ENCODE measurements at regions of chr17 and their contacts with region 1.

Region 1: GRCh38 chr17:8057691-8058114 is 18.8 kb downstream of the ALOX15B start:
- DNase-seq: peak; percentile 59
- ATAC-seq: peak; percentile 72
- H3K4me3 Mint-ChIP-seq: no peak overlapping the region
- H3K27ac Mint-ChIP-seq: no peak overlapping the region
- H3K4me1 Mint-ChIP-seq: peaks cover 32% of the 10 kb centered on the region
- H3K27me3 Mint-ChIP-seq: peaks cover 44% of the 10 kb centered on the region

Region 2: DNA sequence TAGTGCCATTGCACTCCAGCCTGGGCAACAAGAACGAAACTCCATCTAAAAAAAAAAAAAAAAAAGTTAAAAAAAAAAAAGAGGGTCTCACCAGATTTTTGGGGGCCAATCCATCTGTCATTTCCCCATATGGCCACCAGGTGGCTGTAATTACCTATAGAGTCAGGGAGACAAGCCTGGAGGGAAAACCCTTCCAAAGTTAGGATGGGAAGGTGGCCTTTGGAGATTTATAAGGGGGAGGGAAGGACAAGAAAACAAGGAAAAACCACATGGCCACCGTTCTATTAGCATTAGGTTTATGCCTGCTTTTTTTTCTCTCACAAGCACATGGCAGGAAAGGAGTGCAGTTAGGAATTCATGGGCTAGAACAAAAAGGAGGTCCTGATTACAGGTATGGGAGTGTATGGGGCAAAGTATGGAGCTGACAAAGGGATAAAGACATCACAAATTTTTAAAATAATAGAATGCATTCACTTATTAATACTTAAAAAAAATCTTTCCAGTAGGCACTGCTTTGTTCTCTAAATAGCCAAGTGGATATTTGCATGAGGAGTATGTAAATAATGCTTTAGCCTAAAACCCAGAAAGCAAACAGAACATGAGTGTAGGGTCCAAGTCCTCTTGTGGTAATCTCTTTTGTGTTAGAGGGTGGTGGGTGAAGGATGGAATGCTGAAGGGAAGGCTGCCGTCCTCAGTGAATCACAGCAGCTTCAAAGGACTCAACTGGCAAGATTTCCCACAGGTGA is 194.8 kb before region 1 on chr17:
- CTCF ChIA-PET with region 1: interaction called, 12 read pairs
- POLR2A ChIA-PET with region 1: no interaction called
- DNase-seq: peak; percentile 61
- ATAC-seq: no peak
- H3K4me3 Mint-ChIP-seq: no peak overlapping the region
- H3K27ac Mint-ChIP-seq: no peak overlapping the region
- H3K4me1 Mint-ChIP-seq: peaks cover 20% of the 10 kb centered on the region
- H3K27me3 Mint-ChIP-seq: no peaks in the 10 kb centered on the region

Region 3: GRCh38 chr17:8016632-8017478 is 40.8 kb before region 1 on chr17:
- CTCF ChIA-PET with region 1: interaction called, 33 read pairs
- POLR2A ChIA-PET with region 1: no interaction called
- DNase-seq: peak; percentile 73
- ATAC-seq: peak; percentile 81
- H3K4me3 Mint-ChIP-seq: peak overlapping the region; percentile 69
- H3K27ac Mint-ChIP-seq: no peak overlapping the region
- H3K4me1 Mint-ChIP-seq: peaks cover 18% of the 10 kb centered on the region
- H3K27me3 Mint-ChIP-seq: peaks cover 39% of the 10 kb centered on the region

Region 4: DNA sequence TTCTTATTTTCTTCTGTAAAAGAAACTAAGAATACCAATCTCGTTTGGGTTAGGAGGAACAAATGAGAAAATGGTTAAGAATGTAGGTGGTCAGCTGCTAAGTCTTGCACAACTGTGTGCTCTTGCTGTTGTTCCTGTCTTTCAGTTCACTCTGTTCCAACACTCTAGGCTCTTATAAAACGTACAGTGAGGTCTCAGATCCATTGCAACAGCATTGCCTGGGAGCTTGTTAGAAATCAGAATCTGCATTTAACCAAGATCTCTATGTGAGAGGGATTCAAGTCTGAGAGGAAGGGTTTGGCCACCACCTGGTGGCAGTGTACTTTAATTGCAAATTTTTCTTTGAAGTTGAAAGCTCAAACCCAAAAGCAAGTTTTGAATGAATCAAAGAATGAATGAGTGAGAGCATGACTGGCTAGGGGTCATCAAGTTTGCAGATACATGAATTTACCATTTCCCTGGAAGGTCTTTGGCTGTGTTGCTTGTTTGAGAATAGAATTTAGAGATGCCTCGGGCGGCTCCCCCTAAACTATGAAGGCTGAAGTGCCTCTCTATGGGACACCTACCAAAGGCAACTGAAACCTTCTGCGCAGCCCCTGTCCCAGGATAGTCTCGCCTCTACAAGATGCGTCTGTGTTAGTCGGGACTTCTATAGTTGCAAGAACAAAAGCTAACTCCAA is 16.3 kb before region 1 on chr17:
- CTCF ChIA-PET with region 1: interaction called, 86 read pairs
- POLR2A ChIA-PET with region 1: no interaction called
- DNase-seq: peak; percentile 69
- ATAC-seq: no peak
- H3K4me3 Mint-ChIP-seq: no peak overlapping the region
- H3K27ac Mint-ChIP-seq: no peak overlapping the region
- H3K4me1 Mint-ChIP-seq: peaks cover 3% of the 10 kb centered on the region
- H3K27me3 Mint-ChIP-seq: peaks cover 35% of the 10 kb centered on the region

Region 5: DNA sequence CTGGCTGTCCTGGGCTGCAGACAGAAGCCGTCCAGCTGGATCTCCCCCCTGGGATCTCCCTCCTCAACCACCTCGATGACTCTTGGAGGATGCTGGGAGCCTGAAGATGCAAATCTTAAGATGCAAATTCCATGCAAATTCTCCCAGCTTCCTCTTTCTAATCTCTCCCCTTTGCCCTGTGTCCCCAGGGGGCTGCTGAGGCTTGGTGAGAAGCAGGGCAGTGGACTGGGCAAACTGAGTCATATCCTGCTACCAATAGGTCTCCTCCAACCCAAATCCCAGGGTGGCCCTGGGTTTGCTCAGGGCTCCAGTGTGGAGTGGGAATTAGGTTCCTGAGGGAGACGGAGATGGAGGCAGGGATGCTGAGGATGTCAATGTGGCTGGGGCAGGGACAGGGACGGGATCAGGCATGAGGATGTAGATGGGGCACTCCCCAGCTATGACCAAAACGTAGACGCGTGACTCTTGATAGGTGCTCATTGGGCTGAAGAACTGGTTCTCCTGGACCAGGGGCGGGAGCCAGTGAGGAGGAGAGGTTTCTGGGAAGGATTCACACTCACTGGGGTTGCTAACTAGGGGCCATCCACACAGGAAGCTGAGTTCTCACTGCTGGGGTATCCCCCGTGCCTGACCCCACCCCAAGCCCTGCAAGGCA is 33.5 kb after region 1 on chr17:
- CTCF ChIA-PET with region 1: interaction called, 32 read pairs
- POLR2A ChIA-PET with region 1: no interaction called
- DNase-seq: no peak
- ATAC-seq: no peak
- H3K4me3 Mint-ChIP-seq: no peak overlapping the region
- H3K27ac Mint-ChIP-seq: no peak overlapping the region
- H3K4me1 Mint-ChIP-seq: peaks cover 6% of the 10 kb centered on the region
- H3K27me3 Mint-ChIP-seq: peaks cover 24% of the 10 kb centered on the region

Region 6: DNA sequence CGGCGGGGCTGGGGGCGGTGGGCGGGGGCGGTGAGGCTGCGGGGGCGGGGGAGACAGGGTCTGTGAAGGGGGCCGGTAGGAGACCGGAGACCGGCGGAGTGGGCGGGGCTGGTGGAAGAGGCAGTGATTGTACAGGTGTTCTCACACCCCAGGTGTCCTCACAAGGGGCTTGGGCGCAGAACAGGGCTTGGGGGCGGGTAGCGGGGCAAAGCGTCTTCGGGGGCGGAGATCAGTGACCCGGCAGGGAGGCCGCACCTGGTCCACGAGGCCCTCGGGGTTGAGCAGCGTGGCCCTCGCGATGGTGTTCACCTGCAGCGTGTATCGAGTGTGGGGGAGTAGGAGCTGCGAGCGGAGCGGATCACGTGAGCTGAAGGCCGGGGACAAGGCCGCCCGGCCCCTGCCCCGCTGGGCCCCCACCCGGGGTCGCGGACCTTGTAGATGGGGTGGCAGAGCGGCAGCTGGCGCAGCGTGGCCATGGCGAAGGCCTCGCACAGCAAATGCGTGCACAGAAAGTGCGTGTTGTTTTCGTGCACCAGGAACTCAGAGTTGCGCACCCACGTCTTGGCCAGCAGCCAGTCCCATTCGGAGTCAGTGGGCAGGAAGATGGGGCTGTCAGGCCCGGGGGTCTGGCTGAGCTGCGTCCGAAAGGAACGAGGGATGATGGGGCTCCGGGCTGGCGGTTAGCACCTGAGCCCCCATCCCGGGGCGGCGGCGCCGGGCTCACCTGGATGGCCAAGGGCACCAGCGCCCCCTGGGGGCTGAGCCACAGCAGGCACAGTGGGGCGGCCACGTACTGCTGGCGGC is 52.2 kb after region 1 on chr17:
- CTCF ChIA-PET with region 1: interaction called, 115 read pairs
- POLR2A ChIA-PET with region 1: interaction called, 4 read pairs
- DNase-seq: peak; percentile 81
- ATAC-seq: peak; percentile 98
- H3K4me3 Mint-ChIP-seq: peak overlapping the region; percentile 41
- H3K27ac Mint-ChIP-seq: no peak overlapping the region
- H3K4me1 Mint-ChIP-seq: peaks cover 13% of the 10 kb centered on the region
- H3K27me3 Mint-ChIP-seq: peaks cover 34% of the 10 kb centered on the region

Measured in activated CD8-positive, alpha-beta T cell treated with anti-CD3 and anti-CD28 coated beads, Interleukin-2, amount 10 ng/mL, durations not matched to agents 7 days and 5 days (primary cell).